Activated naive CD4-positive, alpha-beta T cell treated with anti-CD3 and anti-CD28 coated beads, Interleukin-2, amount 10 ng/mL, durations not matched to agents 7 days and 5 days (primary cell): ENCODE measurements at regions of chr1 and their contacts with region 1.

Region 1: GRCh38 chr1:89598450-89599331 is 34.2 kb upstream of the LRRC8C start:
- DNase-seq: no peak
- H3K4me3 Mint-ChIP-seq: no peak overlapping the region
- H3K27ac Mint-ChIP-seq: no peak overlapping the region
- H3K4me1 Mint-ChIP-seq: peaks cover 72% of the 10 kb centered on the region
- H3K27me3 Mint-ChIP-seq: no peaks in the 10 kb centered on the region

Region 2: DNA sequence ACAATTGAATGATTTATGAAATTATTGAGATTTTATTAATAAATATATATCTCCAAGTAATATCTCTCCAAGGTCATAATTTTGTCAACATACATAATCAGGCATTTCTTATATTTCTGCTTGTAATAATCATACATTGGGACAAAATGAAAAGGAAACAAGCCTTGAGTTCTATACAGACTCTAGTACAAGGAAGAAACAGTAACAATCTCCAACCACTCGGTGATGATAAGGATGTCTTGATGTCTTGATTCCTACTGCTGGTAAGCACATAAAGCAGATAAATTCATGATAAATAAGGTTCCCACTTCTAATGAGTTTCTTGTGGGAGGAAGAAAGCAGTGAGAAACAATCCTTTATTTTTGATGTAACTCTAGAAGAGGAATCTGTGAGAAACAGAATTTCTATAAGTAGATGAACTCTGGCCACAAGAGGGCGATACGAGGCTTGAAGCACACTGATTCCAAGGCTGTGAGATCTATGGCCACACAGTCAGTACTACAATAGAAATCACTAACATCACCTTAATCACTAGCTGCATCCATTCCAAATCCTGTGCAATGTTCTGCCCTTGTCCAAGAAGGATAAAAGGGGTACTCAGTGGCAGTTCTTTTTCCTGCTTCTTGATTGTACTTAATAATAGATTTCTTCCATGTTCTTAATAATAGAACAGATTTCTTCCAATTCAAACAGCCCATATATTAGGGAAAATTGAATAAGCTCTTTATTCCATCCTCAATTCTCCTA is 115.5 kb before region 1 on chr1:
- CTCF ChIA-PET with region 1: interaction called, 21 read pairs
- DNase-seq: peak; percentile 90
- H3K4me3 Mint-ChIP-seq: no peak overlapping the region
- H3K27ac Mint-ChIP-seq: no peak overlapping the region
- H3K4me1 Mint-ChIP-seq: peaks cover 13% of the 10 kb centered on the region
- H3K27me3 Mint-ChIP-seq: peaks cover 20% of the 10 kb centered on the region

Region 3: GRCh38 chr1:89615676-89616598 is 17.2 kb after region 1 on chr1:
- CTCF ChIA-PET with region 1: interaction called, 11 read pairs
- DNase-seq: peak; percentile 30
- H3K4me3 Mint-ChIP-seq: no peak overlapping the region
- H3K27ac Mint-ChIP-seq: no peak overlapping the region
- H3K4me1 Mint-ChIP-seq: peaks cover 58% of the 10 kb centered on the region
- H3K27me3 Mint-ChIP-seq: no peaks in the 10 kb centered on the region

Region 4: GRCh38 chr1:89708751-89709375 is 110.2 kb after region 1 on chr1:
- CTCF ChIA-PET with region 1: no interaction called
- DNase-seq: no peak
- H3K4me3 Mint-ChIP-seq: no peak overlapping the region
- H3K27ac Mint-ChIP-seq: no peak overlapping the region
- H3K4me1 Mint-ChIP-seq: peaks cover 20% of the 10 kb centered on the region
- H3K27me3 Mint-ChIP-seq: no peaks in the 10 kb centered on the region

Region 5: GRCh38 chr1:89820422-89821321 is 222.0 kb after region 1 on chr1 and contains the start of gene LRRC8D:
- CTCF ChIA-PET with region 1: no interaction called
- DNase-seq: peak; percentile 78
- H3K4me3 Mint-ChIP-seq: peak within 1 kb of the TSS; percentile 69
- H3K27ac Mint-ChIP-seq: peak within 1 kb of the TSS; percentile 64
- H3K4me1 Mint-ChIP-seq: peaks cover 22% of the 10 kb centered on the region
- H3K27me3 Mint-ChIP-seq: peaks cover 27% of the 10 kb centered on the region